Common myeloid progenitor, CD34-positive (primary cell): ENCODE measurements at regions of chr1 and their contacts with region 1.

Region 1: GRCh38 chr1:165597883-165598675 is 33.0 kb upstream of the MGST3 start:
- DNase-seq: peak; percentile 95 to 98 (median 96)
- H3K4me3 ChIP-seq: peak overlapping the region in 6 of 7 experiments; percentile 63 to 80 (median 72)
- H3K27ac ChIP-seq: peak overlapping the region; percentile 77 to 85
- H3K4me1 ChIP-seq: peaks cover 0 to 16% (median 15%) of the 10 kb centered on the region in 4 experiments
- H3K27me3 ChIP-seq: peaks cover 11 to 45% (median 23%) of the 10 kb centered on the region in 5 experiments

Region 2: GRCh38 chr1:165257969-165258459 is 340.1 kb before region 1 on chr1:
- CTCF ChIA-PET with region 1: interaction called, 10 read pairs
- POLR2A ChIA-PET with region 1: no interaction called
- DNase-seq: peak; percentile 33 to 53 (median 41)
- H3K4me3 ChIP-seq: no peak overlapping the region
- H3K27ac ChIP-seq: no peak overlapping the region
- H3K4me1 ChIP-seq: no peaks in the 10 kb centered on the region
- H3K27me3 ChIP-seq: peaks cover 0 to 25% (median 5%) of the 10 kb centered on the region in 5 experiments

Region 3: DNA sequence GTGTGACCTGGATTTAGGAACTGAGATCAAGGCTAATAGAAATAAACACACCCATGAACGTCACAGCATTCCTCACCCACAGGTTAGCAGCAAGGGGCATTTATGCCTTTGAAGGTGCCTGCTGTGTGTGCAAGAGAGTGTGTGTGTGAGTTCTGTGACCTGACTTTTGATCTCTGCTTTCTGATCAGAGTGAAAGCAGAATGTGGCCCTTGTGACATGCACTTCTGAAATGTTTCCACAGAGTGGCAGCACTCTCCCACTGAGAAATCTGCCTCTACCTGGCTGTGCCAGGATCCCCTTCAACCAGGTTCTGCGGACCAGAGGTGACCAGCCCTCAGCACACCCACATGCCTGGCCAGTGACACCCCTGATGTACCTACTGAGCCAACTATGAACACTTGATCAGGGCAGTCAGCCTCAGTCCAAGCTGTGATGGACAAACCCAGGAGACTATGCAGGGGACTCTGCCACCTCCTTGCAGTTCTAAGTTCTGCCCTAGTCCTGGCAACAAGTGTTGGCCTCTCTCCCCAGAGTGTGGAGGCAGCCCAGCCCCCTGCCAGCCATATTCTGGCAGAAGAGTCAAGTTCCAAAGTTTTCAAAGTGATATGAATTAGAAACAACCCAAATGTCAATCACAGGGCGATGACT is 194.1 kb before region 1 on chr1:
- CTCF ChIA-PET with region 1: interaction called, 100 read pairs
- POLR2A ChIA-PET with region 1: no interaction called
- DNase-seq: peak; percentile 25 to 46 (median 44)
- H3K4me3 ChIP-seq: peak overlapping the region in 1 of 7 experiments; percentile 24
- H3K27ac ChIP-seq: no peak overlapping the region
- H3K4me1 ChIP-seq: peaks cover 0 to 4% (median 1%) of the 10 kb centered on the region in 4 experiments
- H3K27me3 ChIP-seq: peaks cover 0 to 89% (median 30%) of the 10 kb centered on the region in 5 experiments